Endothelial cell of umbilical vein (primary cell): ENCODE measurements at regions of chr3 and their contacts with region 1.

Region 1: DNA sequence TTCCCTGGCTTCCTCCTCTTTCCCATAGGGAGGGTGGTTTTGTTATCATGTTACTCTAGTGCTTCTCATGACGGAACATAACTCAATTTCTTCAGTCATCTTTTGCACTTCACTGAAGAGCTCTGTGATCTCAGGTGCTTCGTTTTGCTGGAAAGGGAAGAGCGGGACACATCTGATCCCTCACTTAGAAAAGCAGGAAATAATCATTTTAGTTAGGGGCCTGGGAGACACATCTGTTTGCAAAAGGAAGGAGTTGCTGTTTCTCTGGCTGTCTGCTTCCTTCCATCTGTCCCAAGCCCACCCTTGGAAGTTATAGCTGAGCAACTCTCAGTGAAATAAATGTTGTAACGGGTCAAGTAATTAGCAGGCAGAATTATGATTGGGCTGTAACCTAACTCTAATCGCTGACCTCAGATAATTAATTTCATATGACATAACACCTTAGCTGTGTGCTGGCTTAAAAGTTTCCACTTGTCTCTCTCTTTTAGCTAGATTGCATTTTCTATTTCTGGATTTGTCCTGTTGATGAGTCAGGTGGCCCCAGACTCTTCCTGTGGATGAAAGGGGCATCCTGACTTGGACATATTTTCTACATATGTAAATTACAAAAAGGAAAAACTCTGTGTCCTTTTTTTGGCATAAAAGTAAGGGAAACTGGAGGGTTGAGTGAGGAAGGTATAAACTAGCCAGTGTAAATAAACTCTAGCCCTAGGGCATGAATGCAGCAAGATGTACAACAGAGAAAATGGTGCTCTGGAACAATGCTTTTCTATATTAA is 11.0 kb upstream of the FILIP1L start:
- DNase-seq: peak; percentile 88
- H3K4me3 ChIP-seq: peak overlapping the region in 1 of 3 experiments; percentile 5
- H3K27ac ChIP-seq: peak overlapping the region; percentile 41
- H3K4me1 ChIP-seq: peaks cover 18% of the 10 kb centered on the region
- H3K27me3 ChIP-seq: no peaks in the 10 kb centered on the region
- CTCF ChIP-seq: no peak
- POLR2A ChIP-seq: no peak

Region 2: DNA sequence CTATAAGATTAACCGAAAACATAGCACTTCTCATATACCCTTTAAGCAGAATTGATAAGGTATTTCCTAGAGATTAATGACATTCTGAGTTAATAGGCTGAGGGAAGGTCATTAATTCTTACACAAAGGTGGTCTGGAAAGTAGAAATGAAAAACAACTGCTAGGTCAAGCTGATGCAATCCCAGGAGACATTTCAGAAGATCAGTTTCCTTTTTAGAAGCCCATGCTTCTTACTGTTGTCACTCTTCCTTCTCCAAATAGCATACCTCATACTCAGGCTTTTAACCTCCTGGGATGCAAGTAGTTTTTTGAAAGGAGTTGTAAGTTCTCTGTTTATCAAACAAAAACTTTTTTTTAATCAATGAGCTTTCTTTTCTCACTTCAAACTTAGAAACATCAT is 19.8 kb before region 1 on chr3:
- CTCF ChIA-PET with region 1: interaction called, 3 read pairs
- POLR2A ChIA-PET with region 1: no interaction called
- dilution Hi-C with region 1: no loop called
- intact Hi-C with region 1: loop called (anchors 2 kb)
- DNase-seq: no peak
- H3K4me3 ChIP-seq: no peak overlapping the region
- H3K27ac ChIP-seq: no peak overlapping the region
- H3K4me1 ChIP-seq: peaks cover 8% of the 10 kb centered on the region
- H3K27me3 ChIP-seq: no peaks in the 10 kb centered on the region
- CTCF ChIP-seq: no peak
- POLR2A ChIP-seq: no peak

Region 3: DNA sequence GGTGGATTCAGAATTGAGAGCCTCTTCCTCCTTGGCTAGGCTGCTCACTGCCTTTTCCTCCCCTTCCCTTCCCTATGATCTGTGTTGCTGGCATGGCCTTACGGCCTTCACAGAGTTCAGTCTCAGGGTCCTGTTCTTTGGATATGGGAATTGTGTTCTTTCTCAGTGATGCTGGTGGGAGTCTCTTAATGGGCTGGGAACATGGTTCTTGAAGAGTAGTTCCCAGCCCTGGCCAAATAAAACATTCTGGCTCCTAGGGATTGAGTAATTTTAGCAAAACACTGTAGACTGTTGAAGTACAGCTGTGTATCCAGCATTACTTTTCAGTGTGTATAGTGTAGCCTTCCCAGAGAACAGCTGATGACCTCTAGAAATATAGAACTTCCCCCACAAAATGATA is 11.6 kb after region 1 on chr3:
- CTCF ChIA-PET with region 1: interaction called, 12 read pairs
- POLR2A ChIA-PET with region 1: interaction called, 3 read pairs
- dilution Hi-C with region 1: no loop called
- intact Hi-C with region 1: no loop called
- DNase-seq: no peak
- H3K4me3 ChIP-seq: no peak overlapping the region
- H3K27ac ChIP-seq: no peak overlapping the region
- H3K4me1 ChIP-seq: no peaks in the 10 kb centered on the region
- H3K27me3 ChIP-seq: no peaks in the 10 kb centered on the region
- CTCF ChIP-seq: no peak
- POLR2A ChIP-seq: no peak

Region 4: GRCh38 chr3:100150473-100150872 is 25.1 kb after region 1 on chr3:
- CTCF ChIA-PET with region 1: no interaction called
- POLR2A ChIA-PET with region 1: no interaction called
- dilution Hi-C with region 1: no loop called
- intact Hi-C with region 1: no loop called
- DNase-seq: no peak
- H3K4me3 ChIP-seq: no peak overlapping the region
- H3K27ac ChIP-seq: no peak overlapping the region
- H3K4me1 ChIP-seq: no peaks in the 10 kb centered on the region
- H3K27me3 ChIP-seq: no peaks in the 10 kb centered on the region
- CTCF ChIP-seq: no peak
- POLR2A ChIP-seq: no peak